B cell (primary cell): ENCODE measurements at regions of chr9 and their contacts with region 1.

Region 1: GRCh38 chr9:6681147-6681956 is 35.8 kb upstream of the GLDC start:
- DNase-seq: peak; percentile 96
- ATAC-seq: peak; percentile 73
- H3K4me3 ChIP-seq: peak overlapping the region; percentile 69 to 89 (median 77)
- H3K4me3 Mint-ChIP-seq: peak overlapping the region; percentile 98
- H3K27ac ChIP-seq: peak overlapping the region; percentile 93 to 97
- H3K27ac Mint-ChIP-seq: peak overlapping the region; percentile 100
- H3K4me1 ChIP-seq: peaks cover 32 to 48% of the 10 kb centered on the region in 2 donors
- H3K4me1 Mint-ChIP-seq: peaks cover 29% of the 10 kb centered on the region
- H3K27me3 ChIP-seq: no peaks in the 10 kb centered on the region
- H3K27me3 Mint-ChIP-seq: no peaks in the 10 kb centered on the region
- CTCF ChIP-seq: no peak

Region 2: GRCh38 chr9:6008169-6008979 is 673.0 kb before region 1 on chr9:
- CTCF ChIA-PET with region 1: no interaction called
- POLR2A ChIA-PET with region 1: interaction called, 4 read pairs
- intact Hi-C with region 1: loop called (anchors 1 kb)
- DNase-seq: peak; percentile 97
- ATAC-seq: peak; percentile 72
- H3K4me3 ChIP-seq: peak overlapping the region; percentile 43 to 89 (median 73)
- H3K4me3 Mint-ChIP-seq: peak overlapping the region; percentile 95
- H3K27ac ChIP-seq: peak overlapping the region; percentile 86 to 91
- H3K27ac Mint-ChIP-seq: peak overlapping the region; percentile 89
- H3K4me1 ChIP-seq: peaks cover 17 to 21% of the 10 kb centered on the region in 2 donors
- H3K4me1 Mint-ChIP-seq: peaks cover 49% of the 10 kb centered on the region
- H3K27me3 ChIP-seq: no peaks in the 10 kb centered on the region
- H3K27me3 Mint-ChIP-seq: no peaks in the 10 kb centered on the region
- CTCF ChIP-seq: no peak

Region 3: GRCh38 chr9:6412487-6413364 is 268.6 kb before region 1 on chr9 and contains the start of gene UHRF2:
- CTCF ChIA-PET with region 1: no interaction called
- POLR2A ChIA-PET with region 1: interaction called, 7 read pairs
- intact Hi-C with region 1: loop called (anchors 1 kb)
- DNase-seq: peak; percentile 100
- ATAC-seq: peak; percentile 87
- H3K4me3 ChIP-seq: peak within 1 kb of the TSS; percentile 72 to 89 (median 87)
- H3K4me3 Mint-ChIP-seq: peak within 1 kb of the TSS; percentile 88
- H3K27ac ChIP-seq: peak within 1 kb of the TSS; percentile 95 to 97
- H3K27ac Mint-ChIP-seq: peak within 1 kb of the TSS; percentile 98
- H3K4me1 ChIP-seq: peaks cover 61 to 62% of the 10 kb centered on the region in 2 donors
- H3K4me1 Mint-ChIP-seq: peaks cover 58% of the 10 kb centered on the region
- H3K27me3 ChIP-seq: no peaks in the 10 kb centered on the region
- H3K27me3 Mint-ChIP-seq: no peaks in the 10 kb centered on the region
- CTCF ChIP-seq: no peak
- total RNA-seq, gene UHRF2: 153 and 171 TPM in 2 replicates

Region 4: GRCh38 chr9:6645355-6646292 is 35.7 kb before region 1 on chr9 and contains the start of gene GLDC:
- CTCF ChIA-PET with region 1: no interaction called
- POLR2A ChIA-PET with region 1: interaction called, 4 read pairs
- intact Hi-C with region 1: loop called (anchors 1 kb)
- DNase-seq: peak; percentile 69
- ATAC-seq: peak; percentile 79
- H3K4me3 ChIP-seq: peak within 1 kb of the TSS; percentile 44 to 62 (median 57)
- H3K4me3 Mint-ChIP-seq: peak within 1 kb of the TSS; percentile 90
- H3K27ac ChIP-seq: no peak within 1 kb of the TSS
- H3K27ac Mint-ChIP-seq: peak within 1 kb of the TSS; percentile 41
- H3K4me1 ChIP-seq: peaks cover 21 to 23% of the 10 kb centered on the region in 2 donors
- H3K4me1 Mint-ChIP-seq: peaks cover 24% of the 10 kb centered on the region
- H3K27me3 ChIP-seq: peaks cover 0 to 43% (median 24%) of the 10 kb centered on the region in 4 experiments
- H3K27me3 Mint-ChIP-seq: peaks cover 52% of the 10 kb centered on the region
- CTCF ChIP-seq: no peak
- total RNA-seq, gene GLDC: 0.71 and 1.1 TPM in 2 replicates

Region 5: DNA sequence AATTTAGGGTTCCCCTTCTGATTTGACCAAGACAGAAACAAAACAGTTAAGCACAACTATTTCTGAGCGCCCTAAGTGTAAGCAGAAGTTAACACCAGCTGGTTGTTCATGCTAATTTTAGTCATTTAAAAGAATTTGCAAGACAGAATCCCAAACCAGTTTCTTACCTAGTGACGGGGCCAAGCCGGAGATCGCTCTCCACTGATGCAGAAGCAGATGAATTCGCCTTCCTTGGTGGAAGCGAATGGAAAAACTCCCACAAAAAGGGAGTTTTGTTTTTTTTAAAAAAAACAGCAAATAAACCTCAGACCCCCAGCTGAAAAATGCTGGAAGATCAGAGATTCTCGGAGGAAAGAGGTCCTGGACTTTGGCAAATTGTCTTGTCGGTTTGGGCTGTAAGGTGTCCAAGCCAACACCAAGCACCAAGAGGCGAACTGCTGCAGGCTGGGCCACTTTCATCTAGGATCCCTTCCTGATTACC is 11.6 kb after region 1 on chr9:
- CTCF ChIA-PET with region 1: interaction called, 17 read pairs
- POLR2A ChIA-PET with region 1: interaction called, 17 read pairs
- intact Hi-C with region 1: loop called (anchors 1 kb)
- DNase-seq: peak; percentile 55
- ATAC-seq: peak; percentile 28
- H3K4me3 ChIP-seq: peak overlapping the region in 4 of 5 experiments; percentile 14 to 62 (median 28)
- H3K4me3 Mint-ChIP-seq: peak overlapping the region; percentile 87
- H3K27ac ChIP-seq: peak overlapping the region; percentile 79 to 95
- H3K27ac Mint-ChIP-seq: peak overlapping the region; percentile 97
- H3K4me1 ChIP-seq: peaks cover 76 to 83% of the 10 kb centered on the region in 2 donors
- H3K4me1 Mint-ChIP-seq: peaks cover 65% of the 10 kb centered on the region
- H3K27me3 ChIP-seq: no peaks in the 10 kb centered on the region
- H3K27me3 Mint-ChIP-seq: no peaks in the 10 kb centered on the region
- CTCF ChIP-seq: no peak

Region 6: GRCh38 chr9:6715755-6716643 is 34.6 kb after region 1 on chr9:
- CTCF ChIA-PET with region 1: interaction called, 9 read pairs
- POLR2A ChIA-PET with region 1: interaction called, 29 read pairs
- intact Hi-C with region 1: loop called (anchors 1 kb)
- DNase-seq: peak; percentile 81
- ATAC-seq: peak; percentile 85
- H3K4me3 ChIP-seq: peak overlapping the region; percentile 13 to 77 (median 60)
- H3K4me3 Mint-ChIP-seq: peak overlapping the region; percentile 90
- H3K27ac ChIP-seq: peak overlapping the region; percentile 58 to 76
- H3K27ac Mint-ChIP-seq: peak overlapping the region; percentile 91
- H3K4me1 ChIP-seq: peaks cover 6 to 16% of the 10 kb centered on the region in 2 donors
- H3K4me1 Mint-ChIP-seq: peaks cover 17% of the 10 kb centered on the region
- H3K27me3 ChIP-seq: no peaks in the 10 kb centered on the region
- H3K27me3 Mint-ChIP-seq: no peaks in the 10 kb centered on the region
- CTCF ChIP-seq: no peak